ENCODE measurements at regions of chr1 and their contacts with region 1.

Region 1: DNA sequence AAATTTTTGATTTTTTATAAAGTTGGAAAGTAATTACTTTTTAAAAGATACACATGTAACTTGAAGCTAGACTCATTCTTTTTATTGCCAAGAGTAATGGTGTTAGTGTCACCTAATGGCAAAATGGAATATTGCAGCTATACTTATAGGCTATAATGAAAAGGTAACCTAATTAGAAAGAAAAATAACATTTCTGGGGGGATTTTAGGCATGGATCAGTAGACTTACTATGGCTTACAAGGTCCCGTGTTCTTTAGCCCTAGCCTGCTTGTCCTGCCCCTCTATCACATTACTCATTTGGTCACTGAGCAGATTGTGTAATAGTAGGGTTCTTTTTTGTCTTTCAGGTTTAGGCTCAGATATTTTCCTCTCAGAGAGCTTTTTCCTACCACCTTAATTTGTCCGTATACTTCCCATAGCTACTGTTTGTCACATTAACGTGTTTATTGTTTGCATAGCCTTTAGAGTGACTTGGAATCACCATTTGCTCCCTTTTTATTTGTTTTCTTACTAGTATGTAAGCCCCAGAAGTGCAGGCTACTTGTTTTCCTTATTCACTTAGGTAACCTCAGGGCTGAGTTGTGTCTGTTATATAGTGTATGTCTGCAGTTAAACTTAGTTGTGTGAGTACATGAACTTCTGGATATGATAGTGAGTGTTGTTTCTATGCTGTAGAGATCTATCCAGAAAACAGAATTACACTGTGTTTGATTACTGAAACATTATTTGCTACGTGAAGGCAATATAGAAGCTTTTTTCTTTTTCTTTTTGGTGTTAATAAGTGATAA is 58.7 kb downstream of the RABGAP1L start:
- DNase-seq: peak in 2 of 9 experiments; percentile 58 to 70
- ATAC-seq: peak; percentile 75
- H3K4me3 ChIP-seq: no peak overlapping the region
- H3K4me3 Mint-ChIP-seq: no peak overlapping the region
- H3K27ac ChIP-seq: no peak overlapping the region
- H3K27ac Mint-ChIP-seq: no peak overlapping the region
- H3K4me1 ChIP-seq: no peaks in the 10 kb centered on the region
- H3K4me1 Mint-ChIP-seq: peaks cover 3% of the 10 kb centered on the region
- H3K27me3 ChIP-seq: no peaks in the 10 kb centered on the region
- H3K27me3 Mint-ChIP-seq: no peaks in the 10 kb centered on the region
- CTCF ChIP-seq: peak; percentile 92

Region 2: DNA sequence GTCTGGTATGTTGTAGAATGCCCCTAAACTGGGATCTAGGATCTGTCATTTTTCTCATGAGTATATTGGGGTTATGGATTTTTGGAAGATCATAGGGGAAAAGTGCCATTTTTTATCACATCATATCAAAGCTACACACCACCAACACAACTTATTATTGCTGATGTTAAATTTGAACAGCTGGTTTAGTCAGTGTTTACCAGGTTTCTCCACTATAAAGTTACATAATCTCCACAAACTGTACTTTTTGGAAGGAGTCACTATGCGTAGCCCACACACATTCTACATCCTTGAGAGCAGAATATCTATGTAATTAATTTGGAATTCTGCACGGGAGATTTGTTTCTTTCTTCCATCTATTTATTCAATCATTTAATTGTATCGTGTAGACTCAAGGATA is 231.0 kb before region 1 on chr1:
- CTCF ChIA-PET with region 1: no interaction called
- POLR2A ChIA-PET with region 1: no interaction called
- intact Hi-C with region 1: loop called in 1 of 2 experiments (anchors 5 kb)
- DNase-seq: no peak
- ATAC-seq: no peak
- H3K4me3 ChIP-seq: no peak overlapping the region
- H3K4me3 Mint-ChIP-seq: no peak overlapping the region
- H3K27ac ChIP-seq: no peak overlapping the region
- H3K27ac Mint-ChIP-seq: peak overlapping the region; percentile 71
- H3K4me1 ChIP-seq: no peaks in the 10 kb centered on the region
- H3K4me1 Mint-ChIP-seq: peaks cover 5% of the 10 kb centered on the region
- H3K27me3 ChIP-seq: no peaks in the 10 kb centered on the region
- H3K27me3 Mint-ChIP-seq: no peaks in the 10 kb centered on the region
- CTCF ChIP-seq: no peak

Region 3: GRCh38 chr1:174097426-174097825 is 120.6 kb before region 1 on chr1:
- CTCF ChIA-PET with region 1: interaction called, 5 read pairs
- POLR2A ChIA-PET with region 1: no interaction called
- intact Hi-C with region 1: loop called in 1 of 2 experiments (anchors 5 kb)
- DNase-seq: no peak
- ATAC-seq: no peak
- H3K4me3 ChIP-seq: no peak overlapping the region
- H3K4me3 Mint-ChIP-seq: no peak overlapping the region
- H3K27ac ChIP-seq: no peak overlapping the region
- H3K27ac Mint-ChIP-seq: no peak overlapping the region
- H3K4me1 ChIP-seq: no peaks in the 10 kb centered on the region
- H3K4me1 Mint-ChIP-seq: no peaks in the 10 kb centered on the region
- H3K27me3 ChIP-seq: no peaks in the 10 kb centered on the region
- H3K27me3 Mint-ChIP-seq: no peaks in the 10 kb centered on the region
- CTCF ChIP-seq: no peak

Measured in CD8-positive, alpha-beta T cell (primary cell).